ENCODE measurements at regions of chr12 and their contacts with region 1.

Region 1: GRCh38 chr12:26028953-26029735 is 70.7 kb downstream of the RASSF8 start:
- DNase-seq: no peak
- H3K4me3 ChIP-seq: no peak overlapping the region
- H3K27ac ChIP-seq: peak overlapping the region; percentile 19 to 68 (median 41)
- H3K4me1 ChIP-seq: peaks cover 0 to 69% (median 56%) of the 10 kb centered on the region in 4 donors
- H3K27me3 ChIP-seq: no peaks in the 10 kb centered on the region
- CTCF ChIP-seq: peak; percentile 66 to 78 (median 71)
- EP300 ChIP-seq: no peak
- POLR2A ChIP-seq: no peak

Region 2: GRCh38 chr12:25250744-25251730 is 778.1 kb before region 1 on chr12 and contains the start of gene KRAS:
- intact Hi-C with region 1: loop called (anchors 10 kb)
- DNase-seq: peak; percentile 99
- H3K4me3 ChIP-seq: peak within 1 kb of the TSS; percentile 68 to 100 (median 87)
- H3K27ac ChIP-seq: peak within 1 kb of the TSS; percentile 91 to 99 (median 96)
- H3K4me1 ChIP-seq: peaks cover 0 to 31% (median 18%) of the 10 kb centered on the region in 4 donors
- H3K27me3 ChIP-seq: no peaks in the 10 kb centered on the region
- CTCF ChIP-seq: no peak
- EP300 ChIP-seq: peak in 1 of 4 donors; percentile 5
- POLR2A ChIP-seq: peak; percentile 46 to 48
- total RNA-seq, gene KRAS: 19.4 to 24.0 (median 22.5) TPM

Region 3: DNA sequence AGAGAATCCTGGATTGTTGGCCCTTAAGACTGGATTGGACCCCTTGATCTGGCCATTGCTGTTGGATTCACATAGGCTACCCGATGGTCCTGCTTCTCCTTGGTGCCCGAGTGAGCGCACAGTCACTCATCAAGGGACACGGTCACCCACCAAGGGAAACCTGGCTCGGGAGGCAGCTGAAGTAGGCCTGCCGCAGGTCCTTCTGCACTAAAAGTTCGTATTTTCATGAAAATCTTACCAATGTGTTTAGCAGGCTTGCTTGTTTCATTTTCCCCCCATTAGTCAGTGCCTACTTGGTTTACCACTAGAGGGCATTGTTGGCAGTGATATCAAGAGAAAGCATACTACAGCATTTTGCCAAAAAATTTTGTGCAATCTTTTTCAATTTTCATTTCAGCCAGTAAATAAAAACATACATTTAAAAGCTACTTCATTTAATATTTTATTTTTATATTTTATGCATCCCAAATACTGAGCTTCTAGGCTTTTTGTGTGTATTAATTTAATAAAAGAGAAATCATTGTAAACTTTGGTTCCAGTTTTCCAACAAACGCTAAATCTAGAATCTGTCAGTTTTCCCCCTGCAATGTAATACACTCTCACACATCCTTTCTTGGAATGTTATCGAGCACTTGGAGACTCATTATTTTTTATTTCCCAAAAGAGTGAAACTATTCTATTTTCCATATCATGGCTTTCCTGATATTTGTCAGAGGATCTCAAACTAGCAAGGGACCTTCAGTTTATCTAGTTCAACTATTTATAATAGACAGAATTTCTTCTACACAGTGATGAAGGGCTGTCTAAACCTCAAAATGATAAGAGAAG is 592.7 kb before region 1 on chr12:
- intact Hi-C with region 1: loop called (anchors 1 kb)
- DNase-seq: no peak
- H3K4me3 ChIP-seq: peak overlapping the region; percentile 7 to 34 (median 24)
- H3K27ac ChIP-seq: peak overlapping the region in 1 of 4 donors; percentile 48
- H3K4me1 ChIP-seq: peaks cover 0 to 33% (median 25%) of the 10 kb centered on the region in 4 donors
- H3K27me3 ChIP-seq: no peaks in the 10 kb centered on the region
- CTCF ChIP-seq: peak; percentile 64 to 77 (median 70)
- EP300 ChIP-seq: no peak
- POLR2A ChIP-seq: no peak

Region 4: DNA sequence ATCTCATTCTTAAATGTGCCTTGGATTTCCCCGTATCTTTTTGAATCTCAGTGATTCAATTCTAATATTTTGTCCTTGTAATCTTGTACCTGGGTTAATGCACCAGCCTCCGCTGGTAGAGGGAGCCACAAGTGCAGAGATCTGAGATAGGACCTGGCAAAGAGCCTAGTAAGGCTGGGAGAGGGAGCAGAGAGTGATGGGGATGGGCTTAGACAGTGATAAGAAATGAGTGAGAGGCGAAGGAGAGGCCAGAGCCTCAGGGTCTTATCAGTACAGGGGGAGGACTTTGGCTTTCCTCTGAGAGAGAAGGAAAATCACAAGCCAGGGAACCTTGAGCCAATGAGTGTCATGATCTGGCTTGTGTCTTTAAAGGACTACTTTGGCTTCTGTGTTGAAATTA is 445.6 kb before region 1 on chr12:
- intact Hi-C with region 1: loop called (anchors 10 kb)
- DNase-seq: no peak
- H3K4me3 ChIP-seq: no peak overlapping the region
- H3K27ac ChIP-seq: no peak overlapping the region
- H3K4me1 ChIP-seq: peaks cover 0 to 11% (median 3%) of the 10 kb centered on the region in 4 donors
- H3K27me3 ChIP-seq: no peaks in the 10 kb centered on the region
- CTCF ChIP-seq: peak in 1 of 4 experiments; percentile 11
- EP300 ChIP-seq: no peak
- POLR2A ChIP-seq: no peak

Region 5: DNA sequence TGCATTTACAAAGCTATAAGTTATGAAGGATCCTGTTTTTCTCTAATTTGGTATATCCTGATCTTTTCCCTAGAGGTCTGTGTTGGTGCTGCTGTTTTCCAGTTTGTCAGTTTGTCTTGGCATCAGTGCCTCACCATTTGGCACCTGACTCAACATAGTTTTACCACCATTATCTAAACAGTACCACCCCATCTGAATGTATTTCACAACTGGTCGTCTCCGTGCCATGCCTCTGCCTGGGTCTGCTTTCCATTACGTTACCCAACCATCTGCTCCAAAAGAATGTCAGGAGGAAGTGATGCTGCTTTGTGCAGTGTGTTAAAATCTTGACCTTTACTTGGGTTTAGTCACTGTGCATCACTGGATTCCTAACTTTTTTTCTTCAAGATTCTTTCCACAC is 200.0 kb before region 1 on chr12:
- intact Hi-C with region 1: loop called (anchors 10 kb)
- DNase-seq: peak; percentile 84
- H3K4me3 ChIP-seq: no peak overlapping the region
- H3K27ac ChIP-seq: peak overlapping the region; percentile 27 to 77 (median 64)
- H3K4me1 ChIP-seq: peaks cover 0 to 45% (median 39%) of the 10 kb centered on the region in 4 donors
- H3K27me3 ChIP-seq: no peaks in the 10 kb centered on the region
- CTCF ChIP-seq: no peak
- EP300 ChIP-seq: peak in 2 of 4 donors; percentile 56 to 88
- POLR2A ChIP-seq: no peak

Region 6: DNA sequence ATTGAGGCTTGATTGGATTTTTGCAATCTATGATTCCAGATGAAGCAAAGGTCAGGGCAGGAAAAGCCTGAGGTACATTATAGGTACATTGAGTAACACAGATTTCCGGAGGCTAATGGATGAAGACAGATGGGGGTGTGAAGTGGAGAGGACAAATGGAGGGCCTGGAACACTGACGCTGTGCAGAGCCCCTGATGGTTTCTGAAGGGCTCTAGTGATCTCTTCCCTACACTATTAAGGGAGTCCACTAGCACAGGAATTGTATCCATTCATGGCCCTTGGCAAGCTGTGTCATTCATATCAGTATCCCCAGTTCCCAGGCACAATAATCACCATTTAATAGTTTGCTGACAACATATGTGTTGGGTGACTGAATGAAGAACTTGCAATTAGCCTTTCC is 519.1 kb after region 1 on chr12:
- intact Hi-C with region 1: no loop called
- DNase-seq: no peak
- H3K4me3 ChIP-seq: no peak overlapping the region
- H3K27ac ChIP-seq: no peak overlapping the region
- H3K4me1 ChIP-seq: no peaks in the 10 kb centered on the region
- H3K27me3 ChIP-seq: no peaks in the 10 kb centered on the region
- CTCF ChIP-seq: no peak
- EP300 ChIP-seq: no peak
- POLR2A ChIP-seq: no peak

Region 7: GRCh38 chr12:27412047-27412446 is 1382.9 kb after region 1 on chr12:
- intact Hi-C with region 1: no loop called
- DNase-seq: no peak
- H3K4me3 ChIP-seq: no peak overlapping the region
- H3K27ac ChIP-seq: no peak overlapping the region
- H3K4me1 ChIP-seq: no peaks in the 10 kb centered on the region
- H3K27me3 ChIP-seq: no peaks in the 10 kb centered on the region
- CTCF ChIP-seq: no peak
- EP300 ChIP-seq: no peak
- POLR2A ChIP-seq: no peak